ENCODE measurements at regions of chr2 and their contacts with region 1.

Region 1: GRCh38 chr2:200713003-200713703 is 98.6 kb upstream of the BZW1 start:
- DNase-seq: peak; percentile 82
- H3K4me3 ChIP-seq: peak overlapping the region; percentile 54
- CTCF ChIP-seq: peak; percentile 74

Region 2: GRCh38 chr2:200728630-200729029 is 15.5 kb after region 1 on chr2:
- CTCF ChIA-PET with region 1: interaction called, 323 read pairs
- POLR2A ChIA-PET with region 1: no interaction called
- DNase-seq: no peak
- H3K4me3 ChIP-seq: no peak overlapping the region
- CTCF ChIP-seq: no peak

Region 3: GRCh38 chr2:200741468-200742202 is 28.5 kb after region 1 on chr2:
- CTCF ChIA-PET with region 1: interaction called, 323 read pairs
- POLR2A ChIA-PET with region 1: no interaction called
- DNase-seq: no peak
- H3K4me3 ChIP-seq: no peak overlapping the region
- CTCF ChIP-seq: no peak

Region 4: DNA sequence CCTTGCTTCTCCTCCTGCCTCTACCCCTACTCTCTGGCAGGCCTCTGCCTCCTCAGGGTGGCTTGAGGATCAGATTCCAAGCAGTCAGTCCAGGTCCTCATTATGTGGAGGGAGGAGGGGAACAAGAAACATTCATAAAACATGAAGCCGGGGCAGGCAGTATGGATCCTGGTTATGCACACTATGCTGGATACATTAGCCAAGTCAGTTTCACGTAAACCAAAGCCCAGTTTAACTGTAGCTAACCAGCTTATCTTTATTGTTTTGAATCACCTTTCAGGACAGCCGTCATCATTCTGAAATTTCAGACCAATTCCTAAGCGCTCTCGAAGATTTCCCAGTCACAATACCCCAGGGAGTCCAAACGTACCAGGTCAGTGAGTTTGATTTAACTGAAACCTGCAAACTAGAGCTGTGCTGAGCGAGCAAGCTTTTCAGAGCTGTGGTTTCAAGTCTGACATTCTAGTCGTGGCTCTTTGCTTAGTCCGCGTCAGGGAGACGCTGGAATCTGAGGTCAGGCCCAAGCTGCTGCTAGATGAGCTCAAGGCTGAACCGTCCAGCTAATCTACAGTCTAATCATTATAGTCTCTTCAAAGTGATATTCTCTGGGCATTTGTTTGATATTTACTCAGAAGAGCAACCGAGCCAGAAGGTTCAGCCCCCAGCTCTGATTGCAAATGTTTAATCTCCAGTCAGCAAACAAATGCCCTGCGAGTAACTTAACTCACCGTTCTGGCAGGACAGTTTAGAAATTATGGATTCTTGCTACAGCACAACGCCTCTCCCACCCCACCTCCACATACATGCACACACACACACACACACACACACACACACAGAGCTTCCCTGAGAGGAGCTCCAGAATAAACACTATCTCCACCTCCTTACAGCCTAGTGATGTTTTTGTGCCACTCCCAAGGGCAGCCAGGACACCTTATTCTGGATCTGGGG is 34.8 kb after region 1 on chr2:
- CTCF ChIA-PET with region 1: interaction called, 15 read pairs
- POLR2A ChIA-PET with region 1: no interaction called
- DNase-seq: peak; percentile 92
- H3K4me3 ChIP-seq: peak overlapping the region; percentile 6; the same call in 1 of the 2 replicates
- CTCF ChIP-seq: no peak

Region 5: DNA sequence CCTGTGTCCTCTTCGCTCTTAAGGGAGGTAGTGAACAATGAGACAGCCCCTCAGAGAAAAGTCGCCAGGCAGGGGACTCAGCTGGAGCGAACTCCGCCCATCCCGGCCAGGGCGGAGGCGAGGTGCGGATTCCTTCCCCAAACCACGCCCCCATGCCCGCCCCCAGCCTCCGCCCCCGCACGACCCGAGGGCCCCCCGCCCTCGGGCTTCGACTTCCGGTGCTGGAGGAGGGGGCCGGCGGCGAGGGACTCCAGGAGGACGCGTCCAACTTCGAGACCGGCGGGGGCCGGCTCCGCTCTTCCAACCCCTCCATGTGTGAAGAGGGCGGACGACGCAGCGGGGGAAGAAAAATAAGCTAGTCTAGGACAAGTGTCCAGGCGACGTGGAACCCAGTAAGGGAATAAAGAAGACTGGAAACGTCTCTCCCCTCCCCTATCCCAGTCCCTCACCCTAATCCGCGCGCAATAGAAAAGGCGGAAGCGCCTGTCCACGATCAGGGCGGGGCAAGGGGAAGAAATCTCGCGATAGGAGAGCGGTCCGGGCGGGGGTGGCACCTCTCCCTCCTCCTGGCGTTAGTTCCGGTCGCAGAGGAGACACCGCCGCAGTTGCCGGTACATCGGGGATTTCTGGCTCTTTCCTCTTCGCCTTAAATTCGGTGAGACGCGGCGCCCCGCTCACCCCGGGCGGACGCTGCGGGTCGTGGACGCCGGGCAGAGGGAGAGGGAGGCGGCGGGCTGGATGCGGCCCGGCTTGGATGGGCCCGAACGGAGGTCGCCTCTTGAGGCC is 98.4 kb after region 1 on chr2 and contains the start of gene BZW1:
- CTCF ChIA-PET with region 1: interaction called, 16 read pairs
- POLR2A ChIA-PET with region 1: interaction called, 3 read pairs
- DNase-seq: peak; percentile 77
- H3K4me3 ChIP-seq: peak within 1 kb of the TSS; percentile 89
- CTCF ChIP-seq: no peak

Region 6: GRCh38 chr2:200864176-200864976 is 151.2 kb after region 1 on chr2 and contains the start of gene CLK1:
- CTCF ChIA-PET with region 1: interaction called, 17 read pairs
- POLR2A ChIA-PET with region 1: interaction called, 5 read pairs
- DNase-seq: no peak
- H3K4me3 ChIP-seq: peak within 1 kb of the TSS; percentile 93
- CTCF ChIP-seq: no peak

Measured in AG04449 (cell line).